ENCODE measurements at regions of chr5 and their contacts with region 1.

Region 1: GRCh38 chr5:90932052-90932699 is 373.6 kb downstream of the ADGRV1 start:
- DNase-seq: peak in 1 of 2 donors; percentile 63
- ATAC-seq: peak in 7 of 8 donors; percentile 51 to 84 (median 67)
- H3K4me3 ChIP-seq: no peak overlapping the region
- H3K27ac ChIP-seq: peak overlapping the region in 1 of 10 donors; percentile 25
- H3K4me1 ChIP-seq: peaks cover 0 to 15% (median 0%) of the 10 kb centered on the region in 9 donors
- H3K27me3 ChIP-seq: no peaks in the 10 kb centered on the region
- CTCF ChIP-seq: peak; percentile 54 to 87 (median 82)

Region 2: GRCh38 chr5:90575712-90576111 is 356.5 kb before region 1 on chr5:
- intact Hi-C with region 1: no loop called
- DNase-seq: no peak
- ATAC-seq: no peak
- H3K4me3 ChIP-seq: no peak overlapping the region
- H3K27ac ChIP-seq: no peak overlapping the region
- H3K4me1 ChIP-seq: no peaks in the 10 kb centered on the region
- H3K27me3 ChIP-seq: peaks cover 0 to 3% (median 0%) of the 10 kb centered on the region in 7 donors
- CTCF ChIP-seq: no peak

Region 3: DNA sequence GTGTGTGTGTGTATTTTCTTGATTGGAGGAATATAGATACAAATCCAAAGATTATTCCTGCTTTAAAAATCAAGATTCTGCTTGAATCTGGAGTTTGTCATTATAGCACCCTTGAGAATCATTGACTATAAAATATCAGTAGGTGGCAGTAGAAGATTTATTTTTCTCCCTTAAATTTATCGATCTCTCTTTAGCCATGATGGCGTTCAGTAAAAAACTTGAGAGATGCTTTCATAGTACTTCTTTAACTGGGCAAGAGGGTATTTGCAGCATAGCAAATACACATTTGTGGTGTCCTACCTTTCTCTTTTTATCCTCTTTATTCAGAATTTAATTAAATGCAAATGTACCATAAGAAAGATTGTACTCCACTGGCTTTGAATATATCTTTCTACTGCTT is 65.8 kb before region 1 on chr5:
- intact Hi-C with region 1: loop called in 2 of 10 experiments (anchors 5 to 10 kb)
- DNase-seq: no peak
- ATAC-seq: peak in 4 of 8 donors; percentile 46 to 63 (median 61)
- H3K4me3 ChIP-seq: no peak overlapping the region
- H3K27ac ChIP-seq: no peak overlapping the region
- H3K4me1 ChIP-seq: peaks cover 0 to 20% (median 11%) of the 10 kb centered on the region in 9 donors
- H3K27me3 ChIP-seq: no peaks in the 10 kb centered on the region
- CTCF ChIP-seq: peak; percentile 28 to 70 (median 59)

Region 4: GRCh38 chr5:91090995-91091394 is 158.8 kb after region 1 on chr5:
- intact Hi-C with region 1: loop called in 6 of 10 experiments (anchors 5 to 10 kb)
- DNase-seq: no peak
- ATAC-seq: no peak
- H3K4me3 ChIP-seq: no peak overlapping the region
- H3K27ac ChIP-seq: no peak overlapping the region
- H3K4me1 ChIP-seq: no peaks in the 10 kb centered on the region
- H3K27me3 ChIP-seq: no peaks in the 10 kb centered on the region
- CTCF ChIP-seq: no peak